ENCODE measurements at regions of chr4 and their contacts with region 1.

Region 1: DNA sequence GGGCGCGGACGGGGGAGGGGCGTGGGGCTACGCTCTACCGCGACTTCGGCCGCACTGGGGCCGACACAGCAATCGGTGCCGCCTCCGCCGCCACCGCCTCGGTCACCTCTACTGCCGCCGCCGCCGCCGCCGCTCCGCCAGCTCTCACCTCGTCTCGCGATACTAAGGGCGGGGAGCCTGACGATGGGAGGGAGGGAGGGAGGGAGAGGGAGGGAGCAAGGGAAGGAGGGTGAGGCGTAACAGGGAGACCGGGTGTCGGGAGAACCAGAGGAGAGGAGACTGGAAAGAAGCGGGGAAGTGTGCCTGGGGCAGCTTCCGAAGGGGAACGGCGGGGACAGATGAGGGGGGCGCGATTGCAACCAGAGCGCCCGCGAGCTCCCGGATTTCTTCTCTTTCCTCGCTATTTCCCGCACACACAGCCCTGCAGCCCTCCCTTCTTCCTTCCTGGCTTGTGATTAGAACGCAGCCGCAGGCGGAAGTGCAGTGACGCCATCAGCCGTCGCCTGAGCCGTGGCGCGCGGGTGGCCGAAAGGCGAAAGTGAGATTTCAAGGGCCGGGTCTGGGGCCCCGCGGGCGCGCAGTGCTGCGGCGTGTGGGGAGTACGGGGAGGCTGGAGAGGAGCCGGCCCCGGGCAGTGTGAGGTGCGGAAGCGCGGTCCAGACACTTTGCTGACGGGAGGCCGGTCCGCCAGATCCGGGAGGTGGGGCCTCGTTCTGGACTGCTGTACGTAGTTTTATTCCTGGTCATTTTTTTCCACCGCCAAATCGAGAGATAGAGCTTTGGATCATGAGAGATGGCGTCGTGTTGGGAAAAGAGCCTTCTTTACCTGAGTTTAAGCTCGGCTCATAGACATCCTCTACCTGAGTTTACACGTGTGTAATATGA is at the start of gene ANKRD17:
- DNase-seq: peak; percentile 98
- H3K4me3 Mint-ChIP-seq: peak within 1 kb of the TSS; percentile 97
- H3K27ac Mint-ChIP-seq: peak within 1 kb of the TSS; percentile 98
- H3K4me1 Mint-ChIP-seq: peaks cover 40% of the 10 kb centered on the region
- H3K27me3 Mint-ChIP-seq: no peaks in the 10 kb centered on the region
- total RNA-seq, gene ANKRD17: 67.4 and 76.5 TPM in 2 replicates

Region 2: GRCh38 chr4:72063726-72064125 is 1195.2 kb before region 1 on chr4:
- intact Hi-C with region 1: no loop called
- DNase-seq: no peak
- H3K4me3 Mint-ChIP-seq: no peak overlapping the region
- H3K27ac Mint-ChIP-seq: no peak overlapping the region
- H3K4me1 Mint-ChIP-seq: no peaks in the 10 kb centered on the region
- H3K27me3 Mint-ChIP-seq: no peaks in the 10 kb centered on the region

Region 3: DNA sequence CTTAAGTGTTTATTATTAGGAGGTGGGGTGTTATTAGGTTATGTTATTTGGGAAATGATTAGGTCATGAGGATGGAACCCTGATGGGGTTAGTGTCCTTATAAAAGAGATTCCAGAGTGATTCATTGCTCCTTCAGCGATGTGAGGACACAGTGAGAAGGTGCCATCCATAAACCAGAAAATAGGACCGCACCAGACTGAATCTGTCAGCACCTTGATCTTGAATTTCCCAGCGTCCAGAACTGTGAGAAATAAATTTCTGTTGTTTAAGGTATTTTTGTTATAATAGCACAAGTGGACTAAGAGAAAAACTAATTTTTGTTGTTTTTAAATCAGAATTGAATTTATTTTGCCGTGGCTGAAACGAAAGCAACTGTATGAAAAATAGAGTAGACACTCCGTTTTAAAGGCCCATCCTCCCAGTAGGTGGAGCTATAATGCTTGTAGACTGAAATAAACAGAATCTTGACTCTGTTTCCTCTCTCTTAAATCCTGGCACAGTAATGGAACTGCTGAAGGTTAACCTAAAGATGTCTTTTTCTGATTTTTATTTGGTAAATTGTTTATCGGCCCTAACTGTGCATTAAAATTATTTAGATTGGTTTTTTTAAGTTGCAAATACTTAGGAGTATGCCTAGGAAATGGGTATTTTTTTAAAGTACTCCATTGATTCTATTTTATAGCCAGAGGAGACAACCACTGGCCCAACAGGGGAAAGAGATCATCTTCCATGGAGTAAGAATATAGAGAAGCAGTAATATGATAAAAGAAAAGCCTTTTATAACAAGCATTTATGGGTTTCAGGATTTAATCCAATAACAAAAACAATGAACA is 556.7 kb before region 1 on chr4:
- intact Hi-C with region 1: loop called (anchors 5 kb)
- DNase-seq: peak; percentile 79
- H3K4me3 Mint-ChIP-seq: peak overlapping the region; percentile 77
- H3K27ac Mint-ChIP-seq: no peak overlapping the region
- H3K4me1 Mint-ChIP-seq: peaks cover 2% of the 10 kb centered on the region
- H3K27me3 Mint-ChIP-seq: peaks cover 14% of the 10 kb centered on the region

Region 4: DNA sequence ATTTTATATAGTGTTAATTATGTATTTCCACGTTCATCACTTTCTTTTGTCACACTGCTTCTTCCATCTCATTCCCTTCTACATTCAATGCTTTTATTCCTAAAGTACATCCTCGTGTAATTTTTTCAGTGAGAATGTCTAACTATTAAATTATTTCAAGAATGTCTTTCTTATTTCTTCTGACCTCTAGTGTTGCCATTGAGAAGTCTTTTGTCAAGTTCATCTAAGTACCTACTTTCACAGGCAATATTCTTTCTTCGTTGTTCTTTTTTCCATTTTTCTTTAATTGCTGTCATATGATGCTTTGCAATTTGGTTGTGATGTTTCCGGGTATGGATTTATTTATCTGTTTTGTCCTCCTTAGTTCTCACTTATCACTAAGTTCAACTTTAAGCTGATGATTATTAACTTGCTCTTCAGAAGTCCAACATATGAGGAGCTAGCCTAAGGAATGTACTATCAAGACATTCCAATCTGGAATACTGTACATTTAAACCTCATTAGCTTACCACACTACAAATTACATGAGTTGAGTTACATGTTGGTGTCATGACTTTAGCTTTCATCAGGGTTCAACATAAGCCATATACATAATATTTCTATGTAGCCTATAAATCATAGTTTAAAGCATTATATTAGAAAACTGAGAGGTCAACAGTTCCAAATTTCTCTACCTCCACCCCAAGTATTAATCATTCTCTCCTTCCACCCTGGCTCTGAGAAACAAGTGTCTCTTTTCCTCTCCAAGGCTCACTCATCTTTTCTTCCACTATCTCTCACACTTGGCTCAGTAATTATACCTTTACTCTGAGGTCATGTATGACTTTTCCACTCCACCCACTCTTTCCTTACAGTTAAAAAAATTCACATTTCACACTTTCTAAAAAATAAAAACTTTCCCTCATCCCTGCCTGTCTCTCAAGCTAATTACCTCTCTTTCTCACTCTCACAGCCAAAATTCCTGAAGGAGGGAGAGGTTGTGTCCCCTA is 270.9 kb before region 1 on chr4:
- intact Hi-C with region 1: no loop called
- DNase-seq: no peak
- H3K4me3 Mint-ChIP-seq: no peak overlapping the region
- H3K27ac Mint-ChIP-seq: no peak overlapping the region
- H3K4me1 Mint-ChIP-seq: no peaks in the 10 kb centered on the region
- H3K27me3 Mint-ChIP-seq: peaks cover 4% of the 10 kb centered on the region

Region 5: DNA sequence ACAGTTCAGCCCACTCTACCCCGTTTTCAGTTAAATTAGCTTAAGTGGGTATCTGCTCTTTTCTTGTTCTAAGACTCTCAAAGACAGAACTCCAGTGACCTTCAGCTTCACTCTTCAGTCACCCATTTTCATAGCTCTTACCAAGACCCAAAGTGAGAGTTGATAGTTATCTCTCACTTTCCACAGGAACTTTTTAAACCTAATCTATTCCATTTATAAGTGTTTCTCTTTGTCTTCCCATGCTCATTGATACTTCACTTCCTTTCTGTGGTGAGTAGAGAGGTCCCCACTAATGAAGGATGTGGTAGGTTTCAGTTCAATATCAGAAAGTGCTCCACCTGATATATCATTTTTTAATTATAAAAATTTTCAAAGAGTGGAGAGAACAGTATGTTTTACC is 222.8 kb before region 1 on chr4:
- intact Hi-C with region 1: loop called (anchors 1 kb)
- DNase-seq: no peak
- H3K4me3 Mint-ChIP-seq: no peak overlapping the region
- H3K27ac Mint-ChIP-seq: no peak overlapping the region
- H3K4me1 Mint-ChIP-seq: peaks cover 8% of the 10 kb centered on the region
- H3K27me3 Mint-ChIP-seq: peaks cover 3% of the 10 kb centered on the region

Region 6: GRCh38 chr4:73127839-73128453 is 131.0 kb before region 1 on chr4:
- intact Hi-C with region 1: loop called (anchors 1 kb)
- DNase-seq: peak; percentile 64
- H3K4me3 Mint-ChIP-seq: no peak overlapping the region
- H3K27ac Mint-ChIP-seq: no peak overlapping the region
- H3K4me1 Mint-ChIP-seq: peaks cover 3% of the 10 kb centered on the region
- H3K27me3 Mint-ChIP-seq: no peaks in the 10 kb centered on the region

Region 7: GRCh38 chr4:73245955-73246354 is 13.0 kb before region 1 on chr4:
- intact Hi-C with region 1: loop called (anchors 1 kb)
- DNase-seq: no peak
- H3K4me3 Mint-ChIP-seq: no peak overlapping the region
- H3K27ac Mint-ChIP-seq: peak overlapping the region; percentile 27
- H3K4me1 Mint-ChIP-seq: peaks cover 37% of the 10 kb centered on the region
- H3K27me3 Mint-ChIP-seq: no peaks in the 10 kb centered on the region

Region 8: DNA sequence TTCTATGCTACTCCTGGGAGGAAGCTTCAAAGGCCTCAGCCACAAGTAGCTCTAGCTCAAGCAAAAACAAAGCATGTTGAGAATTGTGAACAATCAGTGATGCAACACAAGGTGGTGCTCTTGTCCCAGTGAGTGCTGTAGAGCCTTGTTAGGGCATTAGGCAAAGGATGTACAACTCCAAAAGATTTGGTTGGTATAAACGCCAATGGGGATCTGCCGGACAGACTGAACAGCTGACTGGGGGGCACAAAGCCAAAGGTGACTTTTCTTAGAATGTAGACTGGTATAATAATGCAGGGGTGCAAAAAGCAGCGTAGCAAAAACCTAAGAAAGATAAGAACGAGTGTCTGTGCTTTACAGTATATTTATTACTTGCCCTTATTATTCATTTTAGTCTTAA is 82.5 kb after region 1 on chr4:
- intact Hi-C with region 1: no loop called
- DNase-seq: peak; percentile 58
- H3K4me3 Mint-ChIP-seq: no peak overlapping the region
- H3K27ac Mint-ChIP-seq: no peak overlapping the region
- H3K4me1 Mint-ChIP-seq: no peaks in the 10 kb centered on the region
- H3K27me3 Mint-ChIP-seq: peaks cover 3% of the 10 kb centered on the region

Region 9: DNA sequence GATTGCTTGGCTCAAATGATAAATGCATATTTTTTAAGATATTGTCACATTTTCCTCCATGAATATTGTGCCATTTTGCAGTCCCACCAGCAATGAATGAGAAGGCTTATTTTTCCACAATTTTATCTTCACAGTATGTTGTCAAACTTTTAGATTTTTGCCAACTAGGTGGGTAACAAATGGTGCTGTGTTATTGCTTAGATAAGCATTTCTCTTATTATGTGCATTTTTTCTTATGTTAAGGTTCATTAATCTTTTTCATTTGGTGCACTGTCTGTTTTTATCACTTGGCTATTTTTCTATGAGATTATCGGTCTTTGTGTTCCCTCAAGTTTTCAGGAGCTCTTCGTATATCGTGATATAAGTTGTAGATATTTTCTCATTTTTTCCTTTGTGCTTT is 209.2 kb after region 1 on chr4:
- intact Hi-C with region 1: no loop called
- DNase-seq: no peak
- H3K4me3 Mint-ChIP-seq: no peak overlapping the region
- H3K27ac Mint-ChIP-seq: no peak overlapping the region
- H3K4me1 Mint-ChIP-seq: no peaks in the 10 kb centered on the region
- H3K27me3 Mint-ChIP-seq: peaks cover 7% of the 10 kb centered on the region